ENCODE measurements at regions of chr4 and their contacts with region 1.

Region 1: DNA sequence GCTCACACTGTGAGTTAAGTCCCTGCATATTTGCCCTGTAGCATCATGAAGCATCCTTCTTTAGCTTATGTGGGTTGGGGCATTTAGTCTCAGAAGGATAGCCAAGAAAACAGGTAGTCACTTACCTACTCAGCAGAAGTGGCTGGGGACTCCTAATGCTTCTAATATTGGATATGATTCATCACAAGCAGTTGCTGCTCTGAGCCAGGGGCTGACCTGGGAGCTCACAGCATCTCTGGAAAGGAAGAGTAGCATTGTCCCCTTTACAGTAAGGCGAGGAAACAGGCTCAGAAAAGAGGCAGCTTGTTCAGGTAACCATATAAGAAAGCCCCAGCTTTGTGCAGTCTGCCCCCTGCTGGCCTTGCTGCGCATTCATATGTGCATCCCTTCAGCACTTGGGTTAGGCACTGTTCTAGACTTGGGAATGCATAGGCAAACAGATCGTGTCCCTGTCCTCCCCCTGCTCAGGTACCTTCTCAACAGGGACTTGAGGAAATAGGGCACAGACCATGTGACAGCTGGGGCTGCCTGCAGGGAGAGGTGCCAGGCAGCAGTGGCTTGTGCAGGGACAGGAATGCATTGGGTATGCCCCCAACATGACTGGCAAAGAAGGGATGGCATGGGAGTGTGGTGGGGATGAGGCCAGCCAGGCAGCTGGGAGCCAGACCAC is 35.7 kb upstream of the TBC1D14 start:
- DNase-seq: peak; percentile 53 to 84 (median 69)
- H3K4me3 ChIP-seq: no peak overlapping the region
- H3K27ac ChIP-seq: no peak overlapping the region
- H3K4me1 ChIP-seq: no peaks in the 10 kb centered on the region
- H3K27me3 ChIP-seq: no peaks in the 10 kb centered on the region
- CTCF ChIP-seq: peak; percentile 80

Region 2: DNA sequence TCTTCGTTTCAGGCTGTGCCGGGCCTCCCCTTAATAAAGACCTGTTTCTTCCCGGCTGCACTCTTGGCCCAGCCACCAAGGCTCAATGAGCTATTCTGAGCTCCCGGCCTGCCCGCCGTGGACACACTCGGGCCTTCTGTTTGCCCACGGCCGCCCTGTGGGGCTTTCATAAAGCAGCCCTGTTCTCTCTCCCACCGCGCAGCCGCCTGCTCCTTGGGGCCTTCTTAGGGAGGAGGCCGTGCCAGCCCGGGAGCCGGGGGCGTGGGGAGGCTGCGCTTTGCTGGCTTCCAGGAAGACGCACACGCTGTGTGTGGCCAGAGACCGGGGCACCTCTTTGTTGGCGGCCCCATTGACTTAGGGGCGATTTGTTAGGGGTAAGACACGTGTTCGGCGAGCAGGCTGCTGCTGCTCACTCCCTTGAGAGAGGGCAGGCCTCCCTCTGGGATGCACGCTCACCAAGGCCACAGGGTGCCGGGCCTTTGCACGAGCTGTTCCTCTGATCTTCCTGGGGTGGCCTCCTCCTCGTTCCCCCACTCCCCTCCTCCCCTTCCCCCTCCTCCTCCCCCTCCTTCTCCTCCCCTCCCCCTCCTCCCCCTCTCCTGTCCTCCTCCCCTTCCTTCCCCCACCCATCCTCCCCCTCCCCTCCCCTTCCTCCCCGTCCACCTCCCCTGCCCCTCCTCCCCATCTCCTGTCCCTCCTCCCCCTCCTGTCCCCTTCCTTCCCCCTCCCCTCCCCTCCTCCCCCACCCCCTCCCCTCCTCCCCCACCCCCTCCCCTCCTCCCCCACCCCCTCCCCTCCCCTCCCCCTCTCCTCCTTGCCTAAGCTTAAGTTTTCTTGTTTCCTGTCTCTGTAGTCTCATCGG is 146.6 kb before region 1 on chr4:
- intact Hi-C with region 1: loop called (anchors 5 kb)
- DNase-seq: peak in 2 of 5 donors; percentile 61 to 89
- H3K4me3 ChIP-seq: no peak overlapping the region
- H3K27ac ChIP-seq: no peak overlapping the region
- H3K4me1 ChIP-seq: no peaks in the 10 kb centered on the region
- H3K27me3 ChIP-seq: no peaks in the 10 kb centered on the region
- CTCF ChIP-seq: no peak

Region 3: GRCh38 chr4:6794189-6794588 is 79.7 kb before region 1 on chr4:
- intact Hi-C with region 1: loop called (anchors 10 kb)
- DNase-seq: no peak
- H3K4me3 ChIP-seq: no peak overlapping the region
- H3K27ac ChIP-seq: no peak overlapping the region
- H3K4me1 ChIP-seq: peaks cover 0 to 8% (median 0%) of the 10 kb centered on the region in 3 donors
- H3K27me3 ChIP-seq: no peaks in the 10 kb centered on the region
- CTCF ChIP-seq: no peak